PC-9 (cell line): ENCODE measurements at regions of chr11 and their contacts with region 1.

Region 1: GRCh38 chr11:130782361-130783221 is 133.7 kb downstream of the SNX19 start:
- DNase-seq: peak; percentile 11 to 51
- H3K4me3 ChIP-seq: no peak overlapping the region
- H3K27ac ChIP-seq: peak overlapping the region; percentile 55
- H3K4me1 ChIP-seq: peaks cover 30% of the 10 kb centered on the region
- H3K27me3 ChIP-seq: no peaks in the 10 kb centered on the region
- CTCF ChIP-seq: no peak

Region 2: GRCh38 chr11:130448416-130449309 is 333.9 kb before region 1 on chr11 and contains the start of gene ADAMTS15:
- CTCF ChIA-PET with region 1: no interaction called
- POLR2A ChIA-PET with region 1: no interaction called
- intact Hi-C with region 1: loop called (anchors 5 kb)
- DNase-seq: peak; percentile 79 to 82
- H3K4me3 ChIP-seq: peak within 1 kb of the TSS; percentile 74
- H3K27ac ChIP-seq: peak within 1 kb of the TSS; percentile 28; the same call in 1 of the 2 replicates
- H3K4me1 ChIP-seq: peaks cover 34% of the 10 kb centered on the region
- H3K27me3 ChIP-seq: no peaks in the 10 kb centered on the region
- CTCF ChIP-seq: no peak
- total RNA-seq, gene ADAMTS15: 1.8 and 2.2 TPM in 2 replicates

Region 3: GRCh38 chr11:130671801-130672700 is 110.5 kb before region 1 on chr11:
- CTCF ChIA-PET with region 1: no interaction called
- POLR2A ChIA-PET with region 1: no interaction called
- intact Hi-C with region 1: loop called (anchors 10 kb)
- DNase-seq: no peak
- H3K4me3 ChIP-seq: no peak overlapping the region
- H3K27ac ChIP-seq: no peak overlapping the region
- H3K4me1 ChIP-seq: peaks cover 3% of the 10 kb centered on the region
- H3K27me3 ChIP-seq: no peaks in the 10 kb centered on the region
- CTCF ChIP-seq: no peak

Region 4: GRCh38 chr11:130847517-130847916 is 64.9 kb after region 1 on chr11:
- CTCF ChIA-PET with region 1: no interaction called
- POLR2A ChIA-PET with region 1: no interaction called
- intact Hi-C with region 1: loop called (anchors 5 kb)
- DNase-seq: peak; percentile 44 to 83
- H3K4me3 ChIP-seq: peak overlapping the region; percentile 40; the same call in 1 of the 2 replicates
- H3K27ac ChIP-seq: peak overlapping the region; percentile 90
- H3K4me1 ChIP-seq: peaks cover 15% of the 10 kb centered on the region
- H3K27me3 ChIP-seq: no peaks in the 10 kb centered on the region
- CTCF ChIP-seq: no peak